ENCODE measurements at regions of chr2 and their contacts with region 1.

Region 1: GRCh38 chr2:39124000-39124745 is 3.3 kb upstream of the SOS1 start:
- DNase-seq: peak; percentile 89 to 97 (median 93)
- ATAC-seq: peak; percentile 89
- H3K4me3 ChIP-seq: peak overlapping the region; percentile 98
- H3K4me3 Mint-ChIP-seq: peak overlapping the region; percentile 88 to 99 (median 92)
- H3K27ac ChIP-seq: peak overlapping the region; percentile 92
- H3K27ac Mint-ChIP-seq: peak overlapping the region; percentile 92 to 99 (median 95)
- H3K4me1 ChIP-seq: peaks cover 38% of the 10 kb centered on the region in 2 donors
- H3K4me1 Mint-ChIP-seq: peaks cover 12 to 68% (median 62%) of the 10 kb centered on the region in 7 donors
- H3K27me3 ChIP-seq: no peaks in the 10 kb centered on the region
- H3K27me3 Mint-ChIP-seq: no peaks in the 10 kb centered on the region

Region 2: DNA sequence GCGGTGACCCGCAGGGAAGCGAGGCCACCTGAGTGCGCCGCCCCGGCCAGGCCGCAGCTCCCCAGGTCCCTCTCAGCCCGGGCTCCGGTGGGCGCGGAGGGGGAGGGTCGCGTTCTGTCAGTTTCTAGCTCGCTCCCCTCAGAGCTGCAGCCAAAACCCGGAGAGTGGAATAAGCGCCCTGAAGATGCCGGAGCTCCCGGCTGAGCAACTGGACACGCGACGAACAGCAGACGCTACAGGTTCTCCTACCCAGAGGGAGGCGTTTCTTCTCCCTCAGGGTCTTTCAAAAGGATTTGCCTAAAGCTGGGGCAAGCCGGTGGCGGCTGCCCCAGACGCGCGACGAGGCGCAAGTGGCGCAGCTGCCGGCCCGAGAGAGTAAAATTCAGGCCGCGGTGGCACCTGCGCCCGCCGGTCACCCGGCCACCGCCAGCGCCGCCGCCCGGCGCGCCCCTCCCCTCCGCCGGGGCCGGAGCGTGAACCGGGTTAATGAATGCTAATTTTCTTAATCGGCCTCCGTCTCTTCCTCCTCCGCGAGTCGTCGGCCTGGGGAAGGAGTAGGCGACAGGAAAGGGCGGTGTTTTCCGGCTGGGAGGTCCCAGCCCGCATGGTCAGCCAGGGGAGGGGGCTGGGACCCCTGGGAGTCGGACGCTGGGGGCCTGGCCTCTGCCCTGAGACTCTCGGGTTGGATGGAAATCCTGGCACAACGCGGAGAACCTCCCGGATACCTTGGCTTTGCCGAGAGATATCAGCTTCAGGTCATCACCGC is 1451.9 kb before region 1 on chr2:
- CTCF ChIA-PET with region 1: no interaction called
- POLR2A ChIA-PET with region 1: no interaction called
- intact Hi-C with region 1: loop called in 1 of 2 experiments (anchors 2 kb)
- DNase-seq: peak; percentile 48 to 74 (median 62)
- ATAC-seq: peak; percentile 68
- H3K4me3 ChIP-seq: peak overlapping the region; percentile 86
- H3K4me3 Mint-ChIP-seq: peak overlapping the region; percentile 78 to 96 (median 89)
- H3K27ac ChIP-seq: peak overlapping the region; percentile 72
- H3K27ac Mint-ChIP-seq: peak overlapping the region in 8 of 9 donors; percentile 65 to 91 (median 84)
- H3K4me1 ChIP-seq: peaks cover 18 to 25% of the 10 kb centered on the region in 2 donors
- H3K4me1 Mint-ChIP-seq: peaks cover 27 to 42% (median 41%) of the 10 kb centered on the region in 7 donors
- H3K27me3 ChIP-seq: no peaks in the 10 kb centered on the region
- H3K27me3 Mint-ChIP-seq: peaks cover 0 to 2% (median 0%) of the 10 kb centered on the region in 5 donors

Region 3: DNA sequence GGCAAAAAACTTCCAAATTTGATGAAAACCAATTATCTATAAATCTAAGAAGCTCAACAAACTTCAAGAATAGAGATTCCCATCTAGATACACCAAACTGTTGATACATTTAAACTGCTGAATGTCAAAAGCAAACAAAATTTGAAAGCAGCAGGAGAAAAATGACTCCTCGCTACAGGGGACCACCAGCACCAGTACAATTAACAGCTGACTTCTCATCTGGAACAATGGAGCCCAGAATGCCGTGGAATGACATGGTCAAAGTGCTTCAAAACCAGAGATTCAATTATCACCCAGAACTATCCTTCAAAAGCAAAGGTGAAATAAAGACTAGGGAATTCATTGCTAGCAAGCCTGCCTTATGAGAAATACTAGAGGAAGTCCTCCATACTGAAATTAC is 384.6 kb before region 1 on chr2:
- CTCF ChIA-PET with region 1: no interaction called
- POLR2A ChIA-PET with region 1: no interaction called
- intact Hi-C with region 1: no loop called
- DNase-seq: no peak
- ATAC-seq: no peak
- H3K4me3 ChIP-seq: no peak overlapping the region
- H3K4me3 Mint-ChIP-seq: no peak overlapping the region
- H3K27ac ChIP-seq: no peak overlapping the region
- H3K27ac Mint-ChIP-seq: peak overlapping the region in 7 of 9 donors; percentile 1 to 81 (median 48)
- H3K4me1 ChIP-seq: peaks cover 0 to 11% of the 10 kb centered on the region in 2 donors
- H3K4me1 Mint-ChIP-seq: peaks cover 12 to 52% (median 30%) of the 10 kb centered on the region in 7 donors
- H3K27me3 ChIP-seq: no peaks in the 10 kb centered on the region
- H3K27me3 Mint-ChIP-seq: no peaks in the 10 kb centered on the region

Region 4: GRCh38 chr2:38750891-38751595 is 373.1 kb before region 1 on chr2 and contains the start of gene SRSF7:
- CTCF ChIA-PET with region 1: no interaction called
- POLR2A ChIA-PET with region 1: interaction called, 11 read pairs
- intact Hi-C with region 1: loop called (anchors 1 kb)
- DNase-seq: peak; percentile 95 to 98 (median 97)
- ATAC-seq: peak; percentile 87
- H3K4me3 ChIP-seq: peak within 1 kb of the TSS; percentile 96
- H3K4me3 Mint-ChIP-seq: peak within 1 kb of the TSS; percentile 95 to 100 (median 99)
- H3K27ac ChIP-seq: peak within 1 kb of the TSS; percentile 95
- H3K27ac Mint-ChIP-seq: peak within 1 kb of the TSS; percentile 98 to 100 (median 100)
- H3K4me1 ChIP-seq: peaks cover 31 to 41% of the 10 kb centered on the region in 2 donors
- H3K4me1 Mint-ChIP-seq: peaks cover 40 to 72% (median 58%) of the 10 kb centered on the region in 7 donors
- H3K27me3 ChIP-seq: no peaks in the 10 kb centered on the region
- H3K27me3 Mint-ChIP-seq: peaks cover 0 to 5% (median 0%) of the 10 kb centered on the region in 5 donors
- total RNA-seq, gene SRSF7: 259 to 503 (median 310) TPM

Region 5: DNA sequence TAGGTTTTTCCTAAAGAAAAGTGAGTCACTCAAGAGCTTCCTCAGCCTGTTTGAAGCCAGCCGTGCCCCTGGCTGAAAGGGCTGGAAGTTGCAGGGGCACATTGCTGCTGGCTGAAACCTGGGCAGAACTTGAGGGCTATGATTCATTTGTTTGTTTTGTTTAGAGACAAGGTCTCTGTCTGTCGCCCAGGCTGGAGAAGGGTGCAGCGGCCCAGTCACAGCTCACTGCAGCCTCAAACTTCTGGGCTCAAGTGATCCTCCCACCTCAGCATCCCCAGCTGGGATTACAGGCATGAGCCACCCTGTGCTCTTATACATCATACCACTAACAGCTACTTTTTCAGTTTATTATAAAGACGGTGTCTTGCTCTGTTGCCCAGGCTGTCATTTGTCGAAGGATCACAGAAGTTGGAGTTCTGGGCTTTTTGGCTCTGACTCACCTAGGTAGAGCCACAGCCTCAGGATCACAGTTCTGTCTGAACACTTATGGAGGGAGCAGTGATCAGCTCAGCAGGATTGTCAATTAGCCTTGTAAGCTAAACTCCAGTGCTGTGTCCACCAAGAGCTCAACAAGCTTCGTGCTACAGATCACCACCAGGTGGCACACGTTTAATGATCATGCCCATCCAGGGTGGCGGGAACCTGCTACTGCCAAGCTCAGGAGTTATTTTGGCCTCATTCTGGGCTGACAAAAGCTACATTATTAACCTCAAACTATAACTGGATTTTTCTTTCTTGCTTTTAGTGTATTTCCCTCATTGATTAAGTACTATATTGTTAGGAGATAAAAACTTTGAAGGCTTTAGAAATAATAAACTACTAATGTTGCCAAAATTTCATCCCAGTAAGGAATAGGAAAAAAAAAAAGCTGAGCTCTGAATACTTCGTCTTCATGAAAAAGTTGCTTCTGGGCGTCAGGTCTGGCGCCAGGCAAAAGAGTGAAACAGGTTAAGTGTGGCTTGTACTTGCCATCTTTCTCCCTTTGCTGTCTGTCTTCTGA is 176.6 kb before region 1 on chr2:
- CTCF ChIA-PET with region 1: interaction called, 4 read pairs
- POLR2A ChIA-PET with region 1: no interaction called
- intact Hi-C with region 1: loop called in 1 of 2 experiments (anchors 5 kb)
- DNase-seq: peak; percentile 8 to 57 (median 35)
- ATAC-seq: peak; percentile 67
- H3K4me3 ChIP-seq: no peak overlapping the region
- H3K4me3 Mint-ChIP-seq: no peak overlapping the region
- H3K27ac ChIP-seq: no peak overlapping the region
- H3K27ac Mint-ChIP-seq: peak overlapping the region in 1 of 9 donors; percentile 13
- H3K4me1 ChIP-seq: no peaks in the 10 kb centered on the region
- H3K4me1 Mint-ChIP-seq: peaks cover 0 to 3% (median 0%) of the 10 kb centered on the region in 7 donors
- H3K27me3 ChIP-seq: no peaks in the 10 kb centered on the region
- H3K27me3 Mint-ChIP-seq: peaks cover 0 to 6% (median 0%) of the 10 kb centered on the region in 5 donors

Region 6: GRCh38 chr2:39099870-39100728 is 24.1 kb before region 1 on chr2:
- CTCF ChIA-PET with region 1: interaction called, 3 read pairs
- POLR2A ChIA-PET with region 1: interaction called, 4 read pairs
- intact Hi-C with region 1: loop called in 1 of 2 experiments (anchors 2 kb)
- DNase-seq: no peak
- ATAC-seq: no peak
- H3K4me3 ChIP-seq: no peak overlapping the region
- H3K4me3 Mint-ChIP-seq: peak overlapping the region in 5 of 10 donors; percentile 4 to 64 (median 53)
- H3K27ac ChIP-seq: no peak overlapping the region
- H3K27ac Mint-ChIP-seq: peak overlapping the region in 5 of 9 donors; percentile 0 to 71 (median 52)
- H3K4me1 ChIP-seq: peaks cover 12 to 21% of the 10 kb centered on the region in 2 donors
- H3K4me1 Mint-ChIP-seq: peaks cover 52 to 80% (median 68%) of the 10 kb centered on the region in 7 donors
- H3K27me3 ChIP-seq: no peaks in the 10 kb centered on the region
- H3K27me3 Mint-ChIP-seq: no peaks in the 10 kb centered on the region

Region 7: GRCh38 chr2:39216346-39217191 is 92.4 kb after region 1 on chr2:
- CTCF ChIA-PET with region 1: interaction called, 3 read pairs
- POLR2A ChIA-PET with region 1: interaction called, 35 read pairs
- intact Hi-C with region 1: loop called (anchors 1 kb)
- DNase-seq: peak; percentile 18 to 92 (median 81)
- ATAC-seq: peak; percentile 94
- H3K4me3 ChIP-seq: peak overlapping the region; percentile 20
- H3K4me3 Mint-ChIP-seq: peak overlapping the region; percentile 18 to 84 (median 60)
- H3K27ac ChIP-seq: peak overlapping the region; percentile 1
- H3K27ac Mint-ChIP-seq: peak overlapping the region; percentile 32 to 97 (median 75)
- H3K4me1 ChIP-seq: peaks cover 29 to 38% of the 10 kb centered on the region in 2 donors
- H3K4me1 Mint-ChIP-seq: peaks cover 26 to 72% (median 38%) of the 10 kb centered on the region in 7 donors
- H3K27me3 ChIP-seq: no peaks in the 10 kb centered on the region
- H3K27me3 Mint-ChIP-seq: peaks cover 0 to 2% (median 0%) of the 10 kb centered on the region in 5 donors

Region 8: DNA sequence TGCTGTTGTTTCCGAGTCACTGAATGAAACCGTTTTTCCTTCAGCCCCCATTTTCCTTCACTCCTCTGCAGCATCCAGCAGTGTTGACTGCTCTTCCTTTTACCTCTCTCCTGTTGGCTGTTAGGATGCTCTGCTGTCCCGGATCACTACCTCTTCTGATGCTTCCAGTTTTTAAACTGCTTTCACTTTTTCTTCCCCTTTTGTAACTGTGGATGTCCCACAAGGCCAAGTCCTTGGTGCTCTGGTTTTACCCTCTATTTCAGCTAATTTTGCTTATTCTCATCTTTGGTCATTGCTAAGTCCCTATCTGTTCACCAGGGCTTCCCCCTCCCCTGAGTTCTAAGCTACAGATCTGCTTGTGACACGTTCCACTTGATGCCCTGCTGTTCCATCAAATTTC is 352.4 kb after region 1 on chr2:
- CTCF ChIA-PET with region 1: no interaction called
- POLR2A ChIA-PET with region 1: no interaction called
- intact Hi-C with region 1: no loop called
- DNase-seq: no peak
- ATAC-seq: peak; percentile 60
- H3K4me3 ChIP-seq: no peak overlapping the region
- H3K4me3 Mint-ChIP-seq: no peak overlapping the region
- H3K27ac ChIP-seq: no peak overlapping the region
- H3K27ac Mint-ChIP-seq: no peak overlapping the region
- H3K4me1 ChIP-seq: no peaks in the 10 kb centered on the region
- H3K4me1 Mint-ChIP-seq: no peaks in the 10 kb centered on the region
- H3K27me3 ChIP-seq: no peaks in the 10 kb centered on the region
- H3K27me3 Mint-ChIP-seq: no peaks in the 10 kb centered on the region